ENCODE measurements at regions of chr13 and their contacts with region 1.

Region 1: DNA sequence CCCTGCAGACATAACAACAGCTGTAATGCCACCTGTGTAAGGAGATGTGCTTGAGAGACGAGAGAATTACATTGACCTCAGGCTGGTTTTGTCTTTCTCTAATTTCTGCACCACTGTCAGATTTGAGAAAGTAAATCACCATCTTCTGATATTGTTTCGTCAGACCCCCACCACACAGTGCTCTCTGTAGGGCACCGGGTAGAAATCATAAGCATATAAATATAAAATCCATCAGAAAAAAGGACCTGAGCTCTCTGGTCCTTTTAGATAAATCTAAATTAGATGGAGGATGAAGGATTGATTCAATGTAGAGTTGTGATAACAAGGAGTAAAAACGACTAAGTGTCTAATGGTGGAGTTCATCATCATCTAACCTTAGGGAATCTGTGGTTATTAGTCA is 1981.0 kb upstream of the PRR20A start:
- DNase-seq: no peak
- ATAC-seq: no peak
- H3K4me3 ChIP-seq: no peak overlapping the region
- H3K27ac ChIP-seq: no peak overlapping the region
- H3K4me1 ChIP-seq: no peaks in the 10 kb centered on the region
- H3K27me3 ChIP-seq: no peaks in the 10 kb centered on the region
- CTCF ChIP-seq: no peak

Region 2: DNA sequence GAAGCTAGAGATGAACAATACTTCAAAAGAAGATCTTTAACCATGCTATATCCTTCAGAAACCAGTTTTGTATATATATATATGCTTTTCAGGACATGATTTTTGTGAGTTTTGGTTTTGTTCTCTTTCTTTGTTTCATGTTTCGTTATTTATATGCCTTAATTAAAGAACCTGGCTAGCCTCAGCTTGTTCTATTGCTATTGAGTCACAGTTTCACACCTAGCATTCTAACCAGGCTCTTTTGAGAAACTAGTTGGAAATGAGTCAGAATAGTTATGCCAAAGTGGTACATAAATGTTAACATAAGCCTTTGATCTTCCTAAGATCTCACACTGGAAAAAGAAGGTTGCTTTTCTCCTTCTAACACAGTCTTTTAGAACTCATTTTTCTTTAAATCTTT is 206.0 kb before region 1 on chr13:
- CTCF ChIA-PET with region 1: no interaction called
- POLR2A ChIA-PET with region 1: no interaction called
- intact Hi-C with region 1: no loop called
- DNase-seq: no peak
- ATAC-seq: no peak
- H3K4me3 ChIP-seq: no peak overlapping the region
- H3K27ac ChIP-seq: no peak overlapping the region
- H3K4me1 ChIP-seq: no peaks in the 10 kb centered on the region
- H3K27me3 ChIP-seq: no peaks in the 10 kb centered on the region
- CTCF ChIP-seq: no peak

Region 3: GRCh38 chr13:55106509-55106908 is 53.3 kb before region 1 on chr13:
- CTCF ChIA-PET with region 1: no interaction called
- POLR2A ChIA-PET with region 1: interaction called, 12 read pairs
- intact Hi-C with region 1: no loop called
- DNase-seq: no peak
- ATAC-seq: no peak
- H3K4me3 ChIP-seq: no peak overlapping the region
- H3K27ac ChIP-seq: no peak overlapping the region
- H3K4me1 ChIP-seq: no peaks in the 10 kb centered on the region
- H3K27me3 ChIP-seq: no peaks in the 10 kb centered on the region
- CTCF ChIP-seq: no peak

Measured in PC-3 (cell line).